ENCODE measurements at regions of chr20 and their contacts with region 1.

Region 1: DNA sequence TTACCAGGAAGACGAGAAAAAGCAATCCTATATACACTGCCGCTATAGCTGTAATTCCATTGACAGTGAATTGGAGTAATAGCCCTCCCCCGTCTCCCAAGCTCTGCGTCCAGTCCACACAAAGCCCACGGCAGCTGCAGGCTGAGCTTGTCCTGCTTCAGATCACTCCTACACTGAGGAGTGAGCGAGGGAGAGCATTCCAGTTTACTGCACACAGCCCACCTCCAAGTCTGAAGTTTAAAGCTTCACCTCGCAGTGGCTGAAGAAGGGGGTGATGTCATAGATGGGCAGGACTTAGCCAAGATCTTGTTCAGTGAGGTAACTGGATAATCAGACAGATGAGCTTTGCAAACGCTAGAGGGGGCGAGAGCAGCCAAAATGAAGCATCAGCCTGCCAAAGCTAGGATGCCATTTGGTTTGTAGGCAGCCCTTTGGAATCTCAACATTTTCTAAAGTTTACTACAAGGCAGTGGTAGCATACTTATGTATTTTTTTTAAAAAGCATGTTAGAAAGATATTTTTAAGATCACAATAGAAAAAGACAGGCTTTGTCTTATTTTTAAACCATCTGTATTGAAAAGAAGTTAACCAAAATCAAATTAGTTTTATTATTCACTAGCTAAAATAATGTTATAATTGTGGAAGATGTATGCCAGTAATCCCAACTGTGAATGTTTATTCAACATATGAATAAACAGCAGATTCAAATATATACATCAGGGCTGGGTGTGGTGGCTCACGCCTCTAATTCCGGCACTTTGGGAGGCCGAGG is at the start of gene FLRT3:
- DNase-seq: peak; percentile 97
- H3K4me3 Mint-ChIP-seq: peak within 1 kb of the TSS; percentile 74
- H3K27ac Mint-ChIP-seq: peak within 1 kb of the TSS; percentile 84
- H3K4me1 Mint-ChIP-seq: no peaks in the 10 kb centered on the region
- H3K27me3 Mint-ChIP-seq: no peaks in the 10 kb centered on the region
- CTCF ChIP-seq: peak; percentile 89
- total RNA-seq, gene FLRT3: 13.3 and 15.7 TPM in 2 replicates

Region 2: DNA sequence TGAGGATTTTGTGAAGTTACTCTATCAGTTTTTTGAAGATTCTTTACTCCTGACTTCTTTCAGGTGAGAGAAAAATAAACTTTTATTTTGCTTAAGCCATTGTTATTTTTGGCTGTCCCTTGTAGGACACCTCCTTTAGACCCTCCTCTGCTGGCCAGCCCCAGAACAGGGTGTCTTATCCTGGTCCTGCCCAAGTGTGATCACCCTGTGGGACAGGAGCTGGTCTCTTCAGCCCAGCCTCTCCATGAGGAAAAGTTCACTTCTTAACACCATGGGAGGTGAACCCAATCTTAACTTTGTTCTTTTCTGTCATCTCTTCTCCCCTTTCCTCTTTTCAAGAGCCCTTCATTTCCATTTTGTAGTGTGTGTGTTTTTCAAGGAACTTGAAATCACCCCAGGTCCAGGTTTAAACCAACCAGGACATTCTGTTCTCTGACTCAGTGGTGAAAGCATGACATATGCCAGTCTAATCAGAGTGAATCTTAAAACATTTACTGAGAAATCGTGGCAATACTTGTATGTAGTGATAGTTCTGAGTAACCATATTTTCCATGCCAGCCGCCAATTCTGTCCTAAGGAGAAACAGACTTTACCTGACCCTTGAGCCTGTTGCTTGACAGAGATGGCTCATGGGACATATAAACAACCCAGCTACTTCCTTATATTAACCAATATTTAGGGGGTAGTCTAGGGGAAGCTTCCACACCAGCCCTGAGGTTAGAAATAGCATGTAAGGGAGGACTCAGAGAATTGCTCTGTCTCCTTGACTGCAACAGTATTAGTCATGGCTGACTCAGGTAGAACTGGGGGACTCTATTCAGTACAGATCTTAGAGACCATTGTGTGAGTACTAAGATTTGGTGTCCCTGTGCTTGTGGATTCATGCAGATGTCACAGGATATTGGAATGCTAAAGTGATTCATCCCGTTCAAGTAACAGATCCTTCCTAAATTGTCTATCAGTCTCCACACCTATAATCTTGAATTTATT is 49.0 kb before region 1 on chr20:
- CTCF ChIA-PET with region 1: interaction called, 7 read pairs
- POLR2A ChIA-PET with region 1: interaction called, 43 read pairs
- intact Hi-C with region 1: loop called (anchors 2 kb)
- DNase-seq: peak; percentile 80
- H3K4me3 Mint-ChIP-seq: peak overlapping the region; percentile 20
- H3K27ac Mint-ChIP-seq: peak overlapping the region; percentile 98
- H3K4me1 Mint-ChIP-seq: peaks cover 45% of the 10 kb centered on the region
- H3K27me3 Mint-ChIP-seq: no peaks in the 10 kb centered on the region
- CTCF ChIP-seq: no peak

Region 3: GRCh38 chr20:14700639-14700960 is 363.0 kb after region 1 on chr20:
- CTCF ChIA-PET with region 1: interaction called, 11 read pairs
- POLR2A ChIA-PET with region 1: interaction called, 8 read pairs
- intact Hi-C with region 1: no loop called
- DNase-seq: peak; percentile 18
- H3K4me3 Mint-ChIP-seq: no peak overlapping the region
- H3K27ac Mint-ChIP-seq: no peak overlapping the region
- H3K4me1 Mint-ChIP-seq: peaks cover 7% of the 10 kb centered on the region
- H3K27me3 Mint-ChIP-seq: no peaks in the 10 kb centered on the region
- CTCF ChIP-seq: no peak

Region 4: GRCh38 chr20:14865169-14865568 is 527.6 kb after region 1 on chr20:
- CTCF ChIA-PET with region 1: interaction called, 3 read pairs
- POLR2A ChIA-PET with region 1: interaction called, 11 read pairs
- intact Hi-C with region 1: loop called (anchors 10 kb)
- DNase-seq: peak; percentile 72
- H3K4me3 Mint-ChIP-seq: no peak overlapping the region
- H3K27ac Mint-ChIP-seq: peak overlapping the region; percentile 42
- H3K4me1 Mint-ChIP-seq: peaks cover 13% of the 10 kb centered on the region
- H3K27me3 Mint-ChIP-seq: no peaks in the 10 kb centered on the region
- CTCF ChIP-seq: no peak

Region 5: GRCh38 chr20:14997635-14998185 is 660.1 kb after region 1 on chr20:
- CTCF ChIA-PET with region 1: interaction called, 4 read pairs
- POLR2A ChIA-PET with region 1: interaction called, 10 read pairs
- intact Hi-C with region 1: no loop called
- DNase-seq: peak; percentile 90
- H3K4me3 Mint-ChIP-seq: no peak overlapping the region
- H3K27ac Mint-ChIP-seq: peak overlapping the region; percentile 54
- H3K4me1 Mint-ChIP-seq: peaks cover 21% of the 10 kb centered on the region
- H3K27me3 Mint-ChIP-seq: no peaks in the 10 kb centered on the region
- CTCF ChIP-seq: no peak

Region 6: GRCh38 chr20:15345287-15345686 is 1007.7 kb after region 1 on chr20:
- CTCF ChIA-PET with region 1: no interaction called
- POLR2A ChIA-PET with region 1: no interaction called
- intact Hi-C with region 1: loop called (anchors 1 kb)
- DNase-seq: peak; percentile 1
- H3K4me3 Mint-ChIP-seq: no peak overlapping the region
- H3K27ac Mint-ChIP-seq: no peak overlapping the region
- H3K4me1 Mint-ChIP-seq: no peaks in the 10 kb centered on the region
- H3K27me3 Mint-ChIP-seq: no peaks in the 10 kb centered on the region
- CTCF ChIP-seq: no peak

Region 7: GRCh38 chr20:15930311-15931305 is 1593.0 kb after region 1 on chr20:
- CTCF ChIA-PET with region 1: interaction called, 3 read pairs
- POLR2A ChIA-PET with region 1: interaction called, 5 read pairs
- intact Hi-C with region 1: loop called (anchors 1 kb)
- DNase-seq: peak; percentile 90
- H3K4me3 Mint-ChIP-seq: no peak overlapping the region
- H3K27ac Mint-ChIP-seq: peak overlapping the region; percentile 72
- H3K4me1 Mint-ChIP-seq: peaks cover 31% of the 10 kb centered on the region
- H3K27me3 Mint-ChIP-seq: no peaks in the 10 kb centered on the region
- CTCF ChIP-seq: peak; percentile 71